CD8-positive, alpha-beta T cell (primary cell): ENCODE measurements at regions of chr4 and their contacts with region 1.

Region 1: DNA sequence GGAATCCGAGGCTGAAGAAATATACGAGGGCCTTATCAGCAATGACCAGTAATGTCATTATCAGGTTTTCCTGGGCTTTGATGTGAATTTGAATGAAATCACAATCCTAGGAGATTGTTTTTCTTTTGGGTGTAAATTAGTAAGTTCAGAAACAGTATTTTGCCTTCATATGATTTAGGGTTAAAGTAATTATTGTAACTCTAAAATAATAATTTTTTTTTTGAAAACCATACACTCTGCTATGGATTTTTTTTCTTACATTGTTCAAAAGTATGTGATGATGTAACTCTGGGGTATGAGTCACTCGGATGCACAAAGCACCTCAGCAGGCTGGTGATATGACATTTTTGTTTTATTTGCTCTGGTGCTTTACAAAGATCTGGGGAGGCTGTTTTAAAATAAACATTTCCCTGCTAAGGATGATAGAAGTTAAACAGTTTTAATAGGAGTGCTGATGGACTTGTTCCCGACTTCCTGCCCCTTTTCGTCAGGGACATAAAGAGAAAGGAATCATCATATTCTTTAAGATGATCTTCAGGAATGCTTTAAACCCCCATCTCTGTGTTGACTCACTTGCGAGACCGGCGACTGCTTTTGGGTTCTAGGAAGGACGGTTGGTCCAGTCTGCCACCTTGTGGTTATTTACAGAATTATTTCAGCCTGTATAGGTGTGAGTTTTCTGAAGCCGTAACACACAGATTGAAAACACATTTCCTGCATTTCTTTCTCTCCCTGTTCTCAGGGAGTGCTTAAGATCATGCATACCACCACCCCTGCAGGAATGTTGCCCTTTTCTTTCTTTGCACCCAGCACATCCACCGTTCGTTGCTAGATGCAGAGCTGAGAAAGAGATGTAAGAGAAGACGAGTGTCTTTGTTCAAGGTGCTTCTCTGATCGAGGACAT is 72.5 kb downstream of the RAPGEF2 start:
- DNase-seq: peak; percentile 5 to 81 (median 57)
- ATAC-seq: peak; percentile 97
- H3K4me3 ChIP-seq: no peak overlapping the region
- H3K4me3 Mint-ChIP-seq: no peak overlapping the region
- H3K27ac ChIP-seq: no peak overlapping the region
- H3K27ac Mint-ChIP-seq: no peak overlapping the region
- H3K4me1 ChIP-seq: peaks cover 7% of the 10 kb centered on the region
- H3K4me1 Mint-ChIP-seq: peaks cover 15% of the 10 kb centered on the region
- H3K27me3 ChIP-seq: peaks cover 0 to 3% of the 10 kb centered on the region in 2 experiments
- H3K27me3 Mint-ChIP-seq: no peaks in the 10 kb centered on the region
- CTCF ChIP-seq: peak; percentile 68

Region 2: GRCh38 chr4:157992038-157992705 is 1183.2 kb before region 1 on chr4:
- CTCF ChIA-PET with region 1: no interaction called
- POLR2A ChIA-PET with region 1: no interaction called
- intact Hi-C with region 1: loop called in 1 of 2 experiments (anchors 5 kb)
- DNase-seq: peak in 3 of 9 experiments; percentile 7 to 54 (median 44)
- ATAC-seq: no peak
- H3K4me3 ChIP-seq: no peak overlapping the region
- H3K4me3 Mint-ChIP-seq: no peak overlapping the region
- H3K27ac ChIP-seq: no peak overlapping the region
- H3K27ac Mint-ChIP-seq: no peak overlapping the region
- H3K4me1 ChIP-seq: no peaks in the 10 kb centered on the region
- H3K4me1 Mint-ChIP-seq: no peaks in the 10 kb centered on the region
- H3K27me3 ChIP-seq: no peaks in the 10 kb centered on the region
- H3K27me3 Mint-ChIP-seq: peaks cover 2% of the 10 kb centered on the region
- CTCF ChIP-seq: peak; percentile 56

Region 3: GRCh38 chr4:158314756-158315487 is 860.4 kb before region 1 on chr4:
- CTCF ChIA-PET with region 1: no interaction called
- POLR2A ChIA-PET with region 1: no interaction called
- intact Hi-C with region 1: no loop called
- DNase-seq: no peak
- ATAC-seq: no peak
- H3K4me3 ChIP-seq: no peak overlapping the region
- H3K4me3 Mint-ChIP-seq: no peak overlapping the region
- H3K27ac ChIP-seq: no peak overlapping the region
- H3K27ac Mint-ChIP-seq: no peak overlapping the region
- H3K4me1 ChIP-seq: no peaks in the 10 kb centered on the region
- H3K4me1 Mint-ChIP-seq: no peaks in the 10 kb centered on the region
- H3K27me3 ChIP-seq: no peaks in the 10 kb centered on the region
- H3K27me3 Mint-ChIP-seq: peaks cover 2% of the 10 kb centered on the region
- CTCF ChIP-seq: no peak

Region 4: DNA sequence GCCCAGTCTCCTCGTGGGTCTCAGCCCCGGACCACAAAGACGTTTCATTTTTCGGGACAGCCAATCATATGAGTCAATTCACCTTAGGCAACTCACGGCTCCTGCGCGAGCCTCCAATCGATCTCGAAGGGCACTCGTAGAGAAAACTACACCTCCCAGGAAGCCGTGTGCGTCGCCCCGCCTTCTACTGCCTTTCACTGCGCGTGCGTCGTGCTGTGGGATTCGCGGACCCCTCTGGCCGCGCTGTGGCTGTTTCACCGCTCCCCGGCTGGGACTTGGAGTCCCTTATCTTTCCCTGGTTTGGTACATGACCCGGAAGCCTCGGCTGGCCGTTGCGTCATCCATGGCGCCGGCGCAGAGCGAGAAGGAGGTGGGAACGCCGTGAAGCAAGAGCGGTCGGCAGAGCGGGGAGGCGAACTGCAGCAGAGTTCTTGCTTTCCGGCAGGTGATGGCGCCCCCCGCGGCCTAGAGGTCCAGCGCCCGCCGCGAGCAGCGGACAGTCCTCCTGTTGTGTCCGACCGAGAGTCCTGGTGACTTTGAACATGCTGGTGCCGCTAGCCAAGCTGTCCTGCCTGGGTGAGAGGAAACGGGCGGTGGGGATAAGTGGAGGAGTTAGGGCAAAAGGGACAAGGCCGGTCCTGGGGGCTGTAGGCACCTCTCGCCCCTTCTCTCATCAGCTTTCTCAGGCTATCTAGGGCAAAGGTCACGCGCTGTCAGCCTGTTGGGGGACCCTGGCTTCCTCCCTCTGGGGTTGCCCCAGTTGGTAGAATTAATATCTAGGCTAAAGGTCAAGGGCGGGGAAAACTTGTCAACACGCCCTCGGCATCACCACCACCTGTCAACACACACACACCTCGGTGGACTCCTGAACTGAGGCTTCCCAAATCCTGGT is 503.2 kb before region 1 on chr4 and contains the start of gene ETFDH:
- CTCF ChIA-PET with region 1: no interaction called
- POLR2A ChIA-PET with region 1: no interaction called
- intact Hi-C with region 1: loop called in 1 of 2 experiments (anchors 10 kb)
- DNase-seq: peak; percentile 97 to 100 (median 98)
- ATAC-seq: peak; percentile 80
- H3K4me3 ChIP-seq: peak within 1 kb of the TSS; percentile 71 to 96
- H3K4me3 Mint-ChIP-seq: peak within 1 kb of the TSS; percentile 97
- H3K27ac ChIP-seq: peak within 1 kb of the TSS; percentile 84 to 97
- H3K27ac Mint-ChIP-seq: peak within 1 kb of the TSS; percentile 96
- H3K4me1 ChIP-seq: peaks cover 14% of the 10 kb centered on the region
- H3K4me1 Mint-ChIP-seq: peaks cover 29% of the 10 kb centered on the region
- H3K27me3 ChIP-seq: no peaks in the 10 kb centered on the region
- H3K27me3 Mint-ChIP-seq: no peaks in the 10 kb centered on the region
- CTCF ChIP-seq: peak; percentile 37
- total RNA-seq, gene ETFDH: 13.4 to 16.7 TPM

Region 5: GRCh38 chr4:158729716-158730559 is 445.4 kb before region 1 on chr4:
- CTCF ChIA-PET with region 1: interaction called, 3 read pairs
- POLR2A ChIA-PET with region 1: no interaction called
- intact Hi-C with region 1: loop called (anchors 1 kb)
- DNase-seq: peak; percentile 22 to 74 (median 51)
- ATAC-seq: peak; percentile 80
- H3K4me3 ChIP-seq: no peak overlapping the region
- H3K4me3 Mint-ChIP-seq: no peak overlapping the region
- H3K27ac ChIP-seq: no peak overlapping the region
- H3K27ac Mint-ChIP-seq: no peak overlapping the region
- H3K4me1 ChIP-seq: no peaks in the 10 kb centered on the region
- H3K4me1 Mint-ChIP-seq: peaks cover 2% of the 10 kb centered on the region
- H3K27me3 ChIP-seq: peaks cover 0 to 5% of the 10 kb centered on the region in 2 experiments
- H3K27me3 Mint-ChIP-seq: peaks cover 37% of the 10 kb centered on the region
- CTCF ChIP-seq: peak; percentile 72

Region 6: GRCh38 chr4:159102622-159103383 is 72.5 kb before region 1 on chr4 and contains the start of gene RAPGEF2:
- CTCF ChIA-PET with region 1: no interaction called
- POLR2A ChIA-PET with region 1: no interaction called
- intact Hi-C with region 1: loop called (anchors 5 kb)
- DNase-seq: peak; percentile 71 to 94 (median 87)
- ATAC-seq: peak; percentile 89
- H3K4me3 ChIP-seq: peak within 1 kb of the TSS; percentile 62 to 94
- H3K4me3 Mint-ChIP-seq: peak within 1 kb of the TSS; percentile 88
- H3K27ac ChIP-seq: peak within 1 kb of the TSS; percentile 70 to 83
- H3K27ac Mint-ChIP-seq: peak within 1 kb of the TSS; percentile 87
- H3K4me1 ChIP-seq: peaks cover 14% of the 10 kb centered on the region
- H3K4me1 Mint-ChIP-seq: peaks cover 36% of the 10 kb centered on the region
- H3K27me3 ChIP-seq: peaks cover 0 to 4% of the 10 kb centered on the region in 2 experiments
- H3K27me3 Mint-ChIP-seq: peaks cover 14% of the 10 kb centered on the region
- CTCF ChIP-seq: no peak
- total RNA-seq, gene RAPGEF2: 24.1 to 25.8 TPM